ENCODE measurements at regions of chr9 and their contacts with region 1.

Region 1: DNA sequence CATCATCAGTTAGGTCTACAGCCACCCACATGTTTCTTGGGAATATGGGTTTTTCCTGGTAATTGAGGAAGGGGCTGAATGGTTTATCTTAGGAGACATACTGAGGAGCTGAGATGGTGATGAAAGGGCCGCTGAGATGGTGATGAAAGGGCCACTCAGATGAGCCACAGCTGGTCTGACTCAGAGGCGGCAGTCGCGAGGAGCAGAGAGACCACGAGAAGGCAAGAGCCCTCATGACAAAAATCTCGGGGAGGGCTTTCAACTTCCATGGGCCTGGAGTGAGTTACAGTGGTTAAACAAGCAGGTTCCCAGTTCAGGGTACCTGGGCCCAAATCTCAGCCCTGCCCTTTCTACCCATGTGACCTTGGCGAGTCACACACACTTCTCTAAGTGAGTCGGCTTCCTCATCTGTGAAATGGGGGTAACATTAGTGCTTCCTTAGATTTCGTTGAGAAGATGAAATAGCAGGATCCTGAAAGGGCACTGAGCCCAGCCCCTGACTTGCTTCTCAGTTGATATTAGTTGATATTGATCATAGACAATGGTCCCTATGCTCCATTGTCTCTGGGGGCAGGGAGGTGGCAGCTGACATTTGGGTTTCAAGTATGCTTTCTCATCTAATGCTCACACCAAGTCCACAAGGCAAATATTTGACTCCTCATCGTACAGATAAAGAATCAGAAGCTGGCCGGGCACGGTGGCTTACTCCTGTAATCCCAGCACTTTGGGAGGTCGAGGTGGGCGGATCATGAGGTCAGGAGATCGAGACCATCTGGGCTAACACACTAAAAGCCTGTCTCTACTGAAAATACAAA is 169.5 kb downstream of the RGS3 start:
- DNase-seq: no peak
- H3K4me3 ChIP-seq: no peak overlapping the region
- H3K27ac ChIP-seq: no peak overlapping the region
- H3K4me1 ChIP-seq: peaks cover 22% of the 10 kb centered on the region
- H3K27me3 ChIP-seq: no peaks in the 10 kb centered on the region
- CTCF ChIP-seq: no peak
- POLR2A ChIP-seq: no peak

Region 2: GRCh38 chr9:113602126-113603044 is 30.6 kb before region 1 on chr9:
- CTCF ChIA-PET with region 1: no interaction called
- POLR2A ChIA-PET with region 1: interaction called, 4 read pairs
- dilution Hi-C with region 1: no loop called
- intact Hi-C with region 1: loop called (anchors 1 kb)
- DNase-seq: peak; percentile 63
- H3K4me3 ChIP-seq: no peak overlapping the region
- H3K27ac ChIP-seq: no peak overlapping the region
- H3K4me1 ChIP-seq: peaks cover 45% of the 10 kb centered on the region
- H3K27me3 ChIP-seq: no peaks in the 10 kb centered on the region
- CTCF ChIP-seq: no peak
- POLR2A ChIP-seq: no peak

Region 3: GRCh38 chr9:113609562-113610318 is 23.2 kb before region 1 on chr9:
- CTCF ChIA-PET with region 1: interaction called, 4 read pairs
- POLR2A ChIA-PET with region 1: no interaction called
- dilution Hi-C with region 1: no loop called
- intact Hi-C with region 1: loop called (anchors 1 kb)
- DNase-seq: peak; percentile 96
- H3K4me3 ChIP-seq: no peak overlapping the region
- H3K27ac ChIP-seq: peak overlapping the region; percentile 98
- H3K4me1 ChIP-seq: peaks cover 26% of the 10 kb centered on the region
- H3K27me3 ChIP-seq: no peaks in the 10 kb centered on the region
- CTCF ChIP-seq: no peak
- POLR2A ChIP-seq: no peak

Region 4: GRCh38 chr9:113648586-113649453 is 15.8 kb after region 1 on chr9:
- CTCF ChIA-PET with region 1: interaction called, 24 read pairs
- POLR2A ChIA-PET with region 1: no interaction called
- dilution Hi-C with region 1: no loop called
- intact Hi-C with region 1: loop called (anchors 1 kb)
- DNase-seq: peak; percentile 64
- H3K4me3 ChIP-seq: no peak overlapping the region
- H3K27ac ChIP-seq: no peak overlapping the region
- H3K4me1 ChIP-seq: peaks cover 21% of the 10 kb centered on the region
- H3K27me3 ChIP-seq: no peaks in the 10 kb centered on the region
- CTCF ChIP-seq: no peak
- POLR2A ChIP-seq: no peak

Region 5: DNA sequence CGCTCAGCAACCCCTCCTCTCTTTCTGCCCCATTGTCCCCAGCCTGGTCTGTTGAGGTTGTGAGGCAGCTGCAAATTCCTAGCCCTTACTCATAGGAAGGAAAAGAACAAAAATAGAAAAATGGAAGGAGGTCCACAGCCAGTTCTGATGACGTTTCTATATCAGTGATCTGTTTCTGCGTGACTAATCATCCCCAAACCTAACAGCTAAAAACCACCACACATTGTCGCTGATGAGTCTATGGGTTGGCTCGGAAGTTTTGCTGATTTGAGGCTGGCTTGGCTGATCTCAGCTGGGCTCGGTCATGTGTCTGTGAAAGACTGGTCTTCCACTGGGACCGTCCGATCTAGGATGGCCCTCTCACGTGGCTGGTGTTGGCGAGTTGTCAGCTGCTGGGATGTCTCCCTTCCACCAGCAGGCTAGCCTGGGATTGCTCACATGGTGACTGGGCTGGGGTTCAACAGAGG is 42.5 kb after region 1 on chr9:
- CTCF ChIA-PET with region 1: no interaction called
- POLR2A ChIA-PET with region 1: no interaction called
- dilution Hi-C with region 1: no loop called
- intact Hi-C with region 1: no loop called
- DNase-seq: peak; percentile 99
- H3K4me3 ChIP-seq: no peak overlapping the region
- H3K27ac ChIP-seq: peak overlapping the region; percentile 83
- H3K4me1 ChIP-seq: peaks cover 30% of the 10 kb centered on the region
- H3K27me3 ChIP-seq: no peaks in the 10 kb centered on the region
- CTCF ChIP-seq: no peak
- POLR2A ChIP-seq: peak; percentile 64

Region 6: DNA sequence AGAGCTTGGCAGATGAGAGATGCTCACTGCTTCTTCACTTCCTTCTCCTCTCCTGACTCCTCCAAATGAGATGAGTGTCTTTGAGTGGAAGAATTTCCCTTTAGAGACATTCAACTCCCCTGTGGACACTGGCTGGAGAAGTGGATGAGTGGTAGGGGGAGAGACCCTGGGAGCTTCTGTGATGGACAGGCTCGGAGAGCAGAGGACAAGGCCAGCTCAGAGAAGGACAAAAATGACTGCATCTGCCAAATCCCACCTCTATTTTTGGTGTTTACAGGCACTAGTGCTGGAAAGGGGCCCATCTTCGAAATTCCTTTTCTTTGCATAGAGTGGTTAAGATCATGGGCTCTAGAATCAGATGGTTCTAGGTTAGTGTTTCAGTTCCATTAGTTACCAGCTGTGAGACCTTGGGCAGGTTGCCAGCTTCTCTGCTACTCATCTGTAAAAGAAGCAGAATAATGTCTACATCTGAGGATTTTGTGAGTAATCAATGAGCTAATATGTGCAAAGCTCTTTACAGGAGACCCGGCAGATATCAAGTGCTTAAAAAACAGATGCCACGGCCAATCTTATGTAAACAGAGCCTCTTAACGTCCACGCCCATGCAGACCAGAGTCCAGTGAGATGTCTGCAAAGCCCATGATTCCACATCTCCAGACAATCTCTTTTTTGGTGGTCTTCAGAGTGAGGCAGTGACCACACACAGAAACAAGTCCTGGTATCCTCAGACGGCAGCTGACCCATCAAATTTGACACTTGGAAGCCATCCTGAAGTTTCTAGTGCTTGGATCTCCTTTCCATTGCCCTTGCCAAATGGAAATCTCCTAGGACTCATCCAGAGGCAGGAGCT is 508.8 kb after region 1 on chr9:
- CTCF ChIA-PET with region 1: no interaction called
- POLR2A ChIA-PET with region 1: no interaction called
- dilution Hi-C with region 1: no loop called
- intact Hi-C with region 1: no loop called
- DNase-seq: no peak
- H3K4me3 ChIP-seq: no peak overlapping the region
- H3K27ac ChIP-seq: no peak overlapping the region
- H3K4me1 ChIP-seq: no peaks in the 10 kb centered on the region
- H3K27me3 ChIP-seq: peaks cover 26 to 33% of the 10 kb centered on the region in 2 experiments
- CTCF ChIP-seq: no peak
- POLR2A ChIP-seq: no peak

Measured in endothelial cell of umbilical vein (primary cell).